Activated T-helper 1 cell treated with anti-CD3 and anti-CD28 coated beads, Interleukin-12 subunit alpha, Interleukin-12 subunit beta, Interleukin-2, Interleukin-4 antibody, amounts not matched to agents 30 ng/mL and 10 ng/mL and 1 ng/mL, durations not matched to agents 14 hours and 24 hours and 36 hours (primary cell): ENCODE measurements at regions of chr7 and their contacts with region 1.

Region 1: DNA sequence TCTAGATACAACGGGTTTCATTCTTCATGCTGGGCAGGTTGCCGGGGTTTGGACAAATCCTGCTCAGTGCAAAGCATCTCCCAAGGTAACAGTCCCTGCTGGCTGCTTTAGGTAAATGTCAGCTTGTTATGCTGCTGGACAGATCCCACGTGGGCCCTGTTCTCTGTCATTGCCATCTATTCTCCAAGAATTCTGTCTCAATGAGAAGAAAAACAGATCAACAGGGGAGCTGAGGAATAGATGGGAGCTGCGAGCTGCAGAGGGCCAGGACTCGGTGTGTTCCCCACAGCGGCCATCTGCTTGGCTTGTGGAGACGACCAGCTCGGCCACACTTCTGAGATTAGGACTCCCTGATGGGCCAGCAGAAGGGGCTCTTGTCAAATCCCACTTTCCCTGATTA is 235.2 kb downstream of the DPP6 start:
- DNase-seq: no peak
- H3K4me3 Mint-ChIP-seq: no peak overlapping the region
- H3K27ac Mint-ChIP-seq: no peak overlapping the region
- H3K4me1 Mint-ChIP-seq: no peaks in the 10 kb centered on the region
- H3K27me3 Mint-ChIP-seq: no peaks in the 10 kb centered on the region

Region 2: GRCh38 chr7:154326421-154326820 is 39.1 kb after region 1 on chr7:
- intact Hi-C with region 1: loop called (anchors 2 kb)
- DNase-seq: no peak
- H3K4me3 Mint-ChIP-seq: no peak overlapping the region
- H3K27ac Mint-ChIP-seq: no peak overlapping the region
- H3K4me1 Mint-ChIP-seq: no peaks in the 10 kb centered on the region
- H3K27me3 Mint-ChIP-seq: no peaks in the 10 kb centered on the region